Testis (tissue), 5 donors: ENCODE measurements at regions of chr2 and their contacts with region 1.

Region 1: GRCh38 chr2:99337113-99338028 is at the start of gene EIF5B:
- DNase-seq: peak; percentile 97
- H3K4me3 ChIP-seq: peak within 1 kb of the TSS; percentile 74 to 98
- H3K27ac ChIP-seq: peak within 1 kb of the TSS; percentile 87 to 90
- H3K4me1 ChIP-seq: peaks cover 19% of the 10 kb centered on the region
- H3K27me3 ChIP-seq: no peaks in the 10 kb centered on the region
- CTCF ChIP-seq: peak; percentile 57 to 63 (median 60)
- POLR2A ChIP-seq: no peak
- total RNA-seq, gene EIF5B: 38.1 to 66.8 TPM

Region 2: GRCh38 chr2:99180755-99181623 is 156.4 kb before region 1 on chr2 and contains the starts of genes MITD1 and MRPL30:
- intact Hi-C with region 1: loop called (anchors 10 kb)
- DNase-seq: peak; percentile 97
- H3K4me3 ChIP-seq: peak within 1 kb of the TSS; percentile 76 to 85
- H3K27ac ChIP-seq: peak within 1 kb of the TSS; percentile 56 to 75
- H3K4me1 ChIP-seq: peaks cover 20% of the 10 kb centered on the region
- H3K27me3 ChIP-seq: no peaks in the 10 kb centered on the region
- CTCF ChIP-seq: peak in 1 of 3 experiments; percentile 5
- POLR2A ChIP-seq: no peak
- total RNA-seq, gene MITD1: 17.8 to 24.7 TPM
- total RNA-seq, gene MRPL30: 19.1 to 26.3 TPM

Region 3: GRCh38 chr2:99389371-99389770 is 52.0 kb after region 1 on chr2:
- intact Hi-C with region 1: no loop called
- DNase-seq: no peak
- H3K4me3 ChIP-seq: no peak overlapping the region
- H3K27ac ChIP-seq: no peak overlapping the region
- H3K4me1 ChIP-seq: no peaks in the 10 kb centered on the region
- H3K27me3 ChIP-seq: no peaks in the 10 kb centered on the region
- CTCF ChIP-seq: no peak
- POLR2A ChIP-seq: no peak

Region 4: DNA sequence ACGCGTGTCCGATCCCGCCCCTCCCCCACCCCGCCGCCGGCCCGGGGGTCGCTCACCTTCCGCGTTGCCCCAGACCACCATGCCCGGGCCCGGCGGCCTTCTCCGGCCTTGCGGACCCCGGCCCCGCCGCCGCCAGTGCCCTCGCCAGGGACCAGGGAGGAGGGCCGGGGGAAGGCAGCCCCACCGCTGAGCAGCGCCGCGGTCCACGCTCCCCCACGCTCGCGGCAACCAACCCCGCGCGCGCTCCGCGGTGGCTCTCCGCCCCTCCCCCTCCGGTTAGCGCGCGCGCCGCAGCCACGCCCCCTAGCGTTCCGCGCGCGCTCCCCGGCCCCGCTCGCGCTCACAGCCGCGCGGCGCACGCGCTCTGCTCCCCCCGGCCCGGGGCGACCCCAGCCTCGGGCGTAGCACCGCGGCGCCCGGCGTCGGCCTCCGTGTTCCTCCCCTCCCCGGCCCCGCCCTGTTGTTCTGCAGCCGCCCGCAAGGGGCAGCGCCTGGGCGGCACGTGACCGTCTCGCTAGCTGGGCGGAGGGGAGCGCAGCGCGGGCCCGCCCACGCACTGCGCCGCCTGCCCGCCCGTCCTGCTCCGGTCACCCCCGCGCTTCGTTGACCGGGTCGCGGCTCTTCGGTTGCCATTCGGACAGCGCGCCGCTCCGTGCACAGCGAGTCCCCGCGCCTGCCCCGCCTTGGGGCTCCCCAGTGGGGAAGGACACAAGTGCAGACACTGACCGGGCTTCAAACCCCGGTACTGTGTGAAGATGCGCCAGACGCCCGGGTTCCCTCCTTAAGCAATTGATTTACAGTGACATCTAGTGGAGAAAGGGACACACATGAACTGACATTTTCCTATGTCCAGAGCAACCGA is 152.6 kb after region 1 on chr2 and contains the start of gene REV1:
- intact Hi-C with region 1: loop called (anchors 5 kb)
- DNase-seq: peak; percentile 93
- H3K4me3 ChIP-seq: peak within 1 kb of the TSS; percentile 77 to 96
- H3K27ac ChIP-seq: peak within 1 kb of the TSS; percentile 90 to 99
- H3K4me1 ChIP-seq: peaks cover 21% of the 10 kb centered on the region
- H3K27me3 ChIP-seq: no peaks in the 10 kb centered on the region
- CTCF ChIP-seq: peak; percentile 62 to 92 (median 85)
- POLR2A ChIP-seq: peak; percentile 42
- total RNA-seq, gene REV1: 73.5 to 79.5 TPM

Region 5: DNA sequence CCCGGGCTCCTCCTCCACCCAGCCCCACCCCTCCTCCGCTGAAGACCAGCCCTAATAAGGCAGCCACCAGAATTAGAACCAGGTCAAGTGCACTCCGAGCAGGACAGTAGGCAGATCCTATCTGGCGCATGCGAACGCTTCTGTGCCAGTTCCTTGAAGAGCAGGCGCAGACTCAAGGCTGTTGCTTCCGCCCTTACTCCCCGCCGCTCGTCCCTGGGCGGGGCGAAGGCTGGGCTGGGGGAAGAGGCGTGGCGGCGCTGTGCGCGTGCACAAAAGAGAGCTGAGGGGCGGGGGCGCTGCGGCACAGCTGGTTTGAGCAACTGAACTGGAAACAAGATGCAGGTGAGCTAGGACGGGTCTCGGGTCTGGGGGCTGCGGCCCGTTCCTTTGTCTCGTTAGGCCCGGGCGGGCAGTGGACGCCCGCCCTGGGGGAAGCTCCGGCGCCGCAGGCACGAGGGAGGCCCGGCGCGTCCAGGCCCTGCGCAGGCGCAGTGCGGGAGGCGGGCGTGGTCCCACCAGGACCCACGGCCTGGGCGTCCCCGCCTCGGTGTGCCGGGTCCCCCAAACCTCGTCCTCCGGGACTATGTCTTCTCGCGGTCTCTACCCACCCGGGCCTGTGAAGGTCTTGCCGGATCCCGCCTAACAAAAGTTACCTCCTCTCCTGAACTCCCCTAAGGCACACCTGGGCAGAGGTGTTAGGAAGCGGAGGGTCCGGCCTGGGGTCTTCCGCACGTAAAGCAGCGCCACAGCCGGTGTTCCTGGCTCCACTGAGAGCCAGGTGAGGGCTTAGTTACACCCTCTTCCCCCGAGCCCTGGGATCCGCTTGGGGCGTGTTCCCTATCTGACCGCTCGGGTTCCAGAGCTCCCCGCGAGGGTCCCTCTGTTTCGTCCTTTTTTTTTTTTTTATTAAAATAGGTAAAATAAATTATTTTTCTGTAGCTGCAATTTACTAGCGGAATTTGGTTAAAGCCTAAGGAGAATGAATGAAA is 1225.7 kb after region 1 on chr2 and contains the start of gene PDCL3:
- intact Hi-C with region 1: loop called (anchors 10 kb)
- DNase-seq: peak; percentile 98
- H3K4me3 ChIP-seq: peak within 1 kb of the TSS; percentile 75 to 96
- H3K27ac ChIP-seq: peak within 1 kb of the TSS; percentile 89 to 96
- H3K4me1 ChIP-seq: peaks cover 27% of the 10 kb centered on the region
- H3K27me3 ChIP-seq: no peaks in the 10 kb centered on the region
- CTCF ChIP-seq: peak in 1 of 3 experiments; percentile 15
- POLR2A ChIP-seq: no peak
- total RNA-seq, gene PDCL3: 26.4 to 35.4 TPM